Activated CD4-positive, alpha-beta memory T cell treated with anti-CD3 and anti-CD28 coated beads for 36 hours (primary cell): ENCODE measurements at regions of chr2 and their contacts with region 1.

Region 1: GRCh38 chr2:229825476-229825875 is 96.3 kb downstream of the TRIP12 start:
- DNase-seq: no peak
- H3K4me3 Mint-ChIP-seq: no peak overlapping the region
- H3K27ac Mint-ChIP-seq: no peak overlapping the region
- H3K4me1 Mint-ChIP-seq: peaks cover 22% of the 10 kb centered on the region
- H3K27me3 Mint-ChIP-seq: no peaks in the 10 kb centered on the region

Region 2: GRCh38 chr2:229673676-229674075 is 151.8 kb before region 1 on chr2:
- CTCF ChIA-PET with region 1: no interaction called
- POLR2A ChIA-PET with region 1: no interaction called
- intact Hi-C with region 1: no loop called
- DNase-seq: no peak
- H3K4me3 Mint-ChIP-seq: no peak overlapping the region
- H3K27ac Mint-ChIP-seq: no peak overlapping the region
- H3K4me1 Mint-ChIP-seq: no peaks in the 10 kb centered on the region
- H3K27me3 Mint-ChIP-seq: peaks cover 32% of the 10 kb centered on the region

Region 3: DNA sequence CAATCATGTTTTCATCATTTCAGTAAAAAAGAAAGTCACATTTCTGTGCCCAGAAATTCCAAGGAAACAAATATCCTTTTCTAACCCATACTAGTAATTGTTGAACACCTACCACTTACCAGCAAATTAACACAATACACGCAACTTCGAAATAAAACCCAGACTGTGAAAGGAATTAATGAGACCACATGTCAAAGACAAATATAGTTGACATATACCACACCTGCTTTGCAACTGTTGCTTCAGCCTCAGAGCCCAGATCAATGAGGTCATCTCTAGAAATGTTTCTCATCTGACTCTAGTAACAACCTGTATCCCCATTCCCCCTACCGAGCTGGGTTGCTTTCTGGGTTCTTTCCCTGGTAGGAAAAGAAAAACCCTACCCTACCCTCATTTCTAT is 43.8 kb after region 1 on chr2:
- CTCF ChIA-PET with region 1: no interaction called
- POLR2A ChIA-PET with region 1: no interaction called
- intact Hi-C with region 1: loop called (anchors 5 kb)
- DNase-seq: no peak
- H3K4me3 Mint-ChIP-seq: no peak overlapping the region
- H3K27ac Mint-ChIP-seq: no peak overlapping the region
- H3K4me1 Mint-ChIP-seq: peaks cover 54% of the 10 kb centered on the region
- H3K27me3 Mint-ChIP-seq: no peaks in the 10 kb centered on the region

Region 4: GRCh38 chr2:229901819-229902218 is 76.3 kb after region 1 on chr2:
- CTCF ChIA-PET with region 1: interaction called, 3 read pairs
- POLR2A ChIA-PET with region 1: interaction called, 4 read pairs
- intact Hi-C with region 1: loop called (anchors 1 kb)
- DNase-seq: no peak
- H3K4me3 Mint-ChIP-seq: no peak overlapping the region
- H3K27ac Mint-ChIP-seq: no peak overlapping the region
- H3K4me1 Mint-ChIP-seq: peaks cover 55% of the 10 kb centered on the region
- H3K27me3 Mint-ChIP-seq: no peaks in the 10 kb centered on the region